ENCODE measurements at regions of chr13 and their contacts with region 1.

Region 1: GRCh38 chr13:41263261-41264027 is at the start of gene MTRF1:
- DNase-seq: peak in 1 of 2 donors; percentile 84
- H3K4me3 ChIP-seq: peak within 1 kb of the TSS; percentile 65 to 75
- H3K27ac ChIP-seq: peak within 1 kb of the TSS; percentile 73 to 85
- H3K4me1 ChIP-seq: peaks cover 0 to 6% of the 10 kb centered on the region in 2 donors
- H3K27me3 ChIP-seq: no peaks in the 10 kb centered on the region
- CTCF ChIP-seq: no peak
- total RNA-seq, gene MTRF1: 17.5 TPM

Region 2: GRCh38 chr13:41132512-41133152 is 130.8 kb before region 1 on chr13 and contains the start of gene KBTBD6:
- intact Hi-C with region 1: loop called (anchors 5 kb)
- DNase-seq: peak; percentile 92 to 98
- H3K4me3 ChIP-seq: peak within 1 kb of the TSS; percentile 77 to 83
- H3K27ac ChIP-seq: peak within 1 kb of the TSS; percentile 76 to 77
- H3K4me1 ChIP-seq: peaks cover 0 to 10% of the 10 kb centered on the region in 2 donors
- H3K27me3 ChIP-seq: no peaks in the 10 kb centered on the region
- CTCF ChIP-seq: no peak
- total RNA-seq, gene KBTBD6: 2.0 TPM

Region 3: DNA sequence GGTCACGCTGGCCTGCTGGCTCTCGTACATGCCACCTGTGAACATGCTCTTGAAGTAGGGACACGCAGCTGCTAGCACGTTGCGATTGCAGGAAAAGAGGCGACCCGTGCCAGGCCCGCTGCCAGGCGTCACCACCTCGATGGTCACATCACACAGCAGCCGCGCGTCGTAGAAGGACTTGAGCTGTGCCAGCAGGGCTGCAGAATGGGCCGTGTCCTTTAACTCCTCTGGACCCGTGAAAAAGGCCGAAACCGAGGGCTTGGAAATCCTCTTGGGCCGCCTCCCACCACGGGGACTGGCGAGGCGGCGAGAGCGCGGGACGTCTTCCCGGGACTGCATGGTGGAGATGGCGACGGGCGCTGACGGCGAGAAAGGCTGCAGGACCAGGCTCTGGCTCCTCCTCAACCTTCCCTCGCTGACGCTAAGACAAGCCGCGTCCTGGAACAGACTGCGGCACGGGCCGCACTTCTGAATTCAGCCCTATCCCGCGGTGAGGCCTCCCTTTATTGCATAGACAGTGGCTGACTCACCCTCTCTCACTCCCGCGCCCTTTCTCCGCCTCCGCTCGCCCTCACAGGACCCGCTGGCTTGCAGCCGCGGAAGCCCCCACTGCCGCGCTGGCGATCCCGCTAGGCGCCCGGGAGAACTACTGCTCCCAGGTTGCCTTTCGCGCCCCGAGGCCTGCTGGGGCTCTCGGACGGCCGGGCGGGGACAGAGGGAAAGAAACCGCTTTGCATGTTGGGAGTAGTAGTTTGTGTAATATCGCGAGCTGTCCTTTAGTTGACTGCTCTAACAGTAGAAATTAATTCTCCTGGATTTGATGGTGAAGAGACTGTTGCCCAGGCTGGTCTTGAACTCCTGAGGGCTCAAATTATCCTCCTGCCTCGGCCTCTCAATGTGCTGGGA is 69.3 kb before region 1 on chr13 and contains the start of gene KBTBD7:
- intact Hi-C with region 1: loop called (anchors 5 kb)
- DNase-seq: peak; percentile 76 to 97
- H3K4me3 ChIP-seq: peak within 1 kb of the TSS; percentile 70 to 94
- H3K27ac ChIP-seq: peak within 1 kb of the TSS; percentile 78 to 86
- H3K4me1 ChIP-seq: peaks cover 0 to 8% of the 10 kb centered on the region in 2 donors
- H3K27me3 ChIP-seq: no peaks in the 10 kb centered on the region
- CTCF ChIP-seq: peak in 2 of 3 experiments; percentile 5 to 11
- total RNA-seq, gene KBTBD7: 2.1 TPM

Region 4: GRCh38 chr13:41310963-41311606 is 47.6 kb after region 1 on chr13 and contains the start of gene NAA16:
- intact Hi-C with region 1: loop called (anchors 1 kb)
- DNase-seq: peak; percentile 53 to 95
- H3K4me3 ChIP-seq: peak within 1 kb of the TSS; percentile 92 to 94
- H3K27ac ChIP-seq: peak within 1 kb of the TSS; percentile 93 to 96
- H3K4me1 ChIP-seq: peaks cover 0 to 12% of the 10 kb centered on the region in 2 donors
- H3K27me3 ChIP-seq: no peaks in the 10 kb centered on the region
- CTCF ChIP-seq: peak; percentile 2 to 8 (median 4)
- total RNA-seq, gene NAA16: 11.9 TPM

Region 5: DNA sequence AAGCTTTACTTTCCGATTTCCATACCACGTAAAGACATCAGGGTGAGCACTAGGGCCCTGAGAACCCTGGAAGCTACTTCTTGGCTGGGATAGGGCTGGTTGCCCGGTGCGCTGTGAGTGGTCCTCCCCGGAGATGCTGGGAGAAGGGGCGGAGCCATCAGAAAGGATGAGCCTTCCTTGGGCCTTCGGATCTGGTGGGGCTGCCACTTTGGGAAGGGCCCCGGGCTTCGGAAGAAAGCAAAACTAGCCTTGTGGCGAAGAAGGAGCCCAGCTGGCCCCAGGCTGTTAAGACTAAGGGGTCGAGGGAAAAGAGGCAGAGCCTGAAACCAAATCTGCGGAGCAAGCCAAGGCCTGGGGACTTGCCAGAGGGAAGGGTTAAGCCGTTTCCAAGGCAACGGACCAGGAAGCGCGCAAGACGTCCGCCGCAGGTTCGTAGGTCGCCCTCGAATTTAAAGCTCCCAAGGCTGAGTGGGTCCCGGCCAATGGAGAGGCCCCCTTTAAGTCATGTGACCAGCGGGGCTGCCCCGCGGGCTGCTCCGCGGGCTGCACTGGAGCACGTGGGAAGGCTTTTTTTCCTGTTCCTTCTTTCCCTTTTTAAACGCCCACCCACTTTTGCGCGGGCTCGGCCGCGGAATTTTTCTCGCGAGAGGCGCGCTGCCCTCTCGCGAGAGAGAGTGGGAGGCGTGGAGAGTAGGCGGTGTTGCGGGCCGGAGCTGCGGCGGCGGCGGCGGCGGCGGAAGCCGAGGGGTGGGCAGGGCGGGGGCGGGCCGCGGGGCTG is 1008.1 kb after region 1 on chr13:
- intact Hi-C with region 1: loop called (anchors 2 kb)
- DNase-seq: peak; percentile 88 to 98
- H3K4me3 ChIP-seq: peak overlapping the region; percentile 82 to 91
- H3K27ac ChIP-seq: peak overlapping the region; percentile 86 to 94
- H3K4me1 ChIP-seq: peaks cover 3 to 5% of the 10 kb centered on the region in 2 donors
- H3K27me3 ChIP-seq: no peaks in the 10 kb centered on the region
- CTCF ChIP-seq: no peak

Measured in ascending aorta (tissue), 2 donors.